HepG2 (cell line): ENCODE measurements at regions of chr11 and their contacts with region 1.

Region 1: GRCh38 chr11:129785383-129786111 is 30.1 kb upstream of the TMEM45B start:
- DNase-seq: peak; percentile 41
- ATAC-seq: peak; percentile 59
- H3K4me3 ChIP-seq: no peak overlapping the region
- H3K27ac ChIP-seq: no peak overlapping the region
- H3K4me1 ChIP-seq: peaks cover 39% of the 10 kb centered on the region
- H3K27me3 ChIP-seq: no peaks in the 10 kb centered on the region
- CTCF ChIP-seq: peak; percentile 53
- EP300 ChIP-seq: no peak
- POLR2A ChIP-seq: no peak
- RAD21 ChIP-seq: no peak

Region 2: GRCh38 chr11:129611661-129612446 is 173.7 kb before region 1 on chr11:
- CTCF ChIA-PET with region 1: no interaction called
- POLR2A ChIA-PET with region 1: no interaction called
- in situ Hi-C with region 1: no loop called
- intact Hi-C with region 1: no loop called
- DNase-seq: no peak
- ATAC-seq: peak; percentile 58
- H3K4me3 ChIP-seq: no peak overlapping the region
- H3K27ac ChIP-seq: no peak overlapping the region
- H3K4me1 ChIP-seq: no peaks in the 10 kb centered on the region
- H3K27me3 ChIP-seq: peaks cover 0 to 29% of the 10 kb centered on the region in 2 experiments; a peak in 1 of 5 replicates
- CTCF ChIP-seq: no peak
- EP300 ChIP-seq: no peak
- POLR2A ChIP-seq: no peak
- RAD21 ChIP-seq: no peak

Region 3: DNA sequence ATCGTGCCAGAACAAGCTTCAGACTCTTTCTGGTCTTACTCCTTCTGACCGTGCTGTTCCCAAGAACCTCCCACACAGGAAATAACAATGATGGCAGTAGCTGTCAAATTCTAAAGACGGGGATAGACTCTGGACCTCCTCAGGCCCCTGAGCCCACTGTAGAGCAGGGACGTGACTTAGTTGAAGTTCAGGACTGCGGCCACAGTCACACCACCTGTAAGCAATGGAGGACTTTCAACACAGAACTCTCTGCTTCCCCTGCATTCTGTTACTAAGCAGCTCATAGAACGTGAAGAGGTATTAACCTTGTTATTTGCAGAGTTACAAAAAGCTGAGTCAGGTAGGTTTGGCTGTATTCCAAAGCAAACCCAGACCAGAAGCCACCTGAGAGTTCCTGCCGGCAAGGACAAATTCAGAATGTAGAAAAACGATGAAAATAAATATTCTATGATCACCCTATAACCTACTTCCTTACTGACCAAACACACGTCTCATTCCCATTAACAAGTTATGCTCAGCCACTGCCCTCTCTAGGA is 42.8 kb after region 1 on chr11:
- CTCF ChIA-PET with region 1: no interaction called
- POLR2A ChIA-PET with region 1: no interaction called
- in situ Hi-C with region 1: no loop called
- intact Hi-C with region 1: loop called (anchors 5 kb)
- DNase-seq: peak; percentile 93
- ATAC-seq: peak; percentile 91
- H3K4me3 ChIP-seq: no peak overlapping the region
- H3K27ac ChIP-seq: peak overlapping the region; percentile 87
- H3K4me1 ChIP-seq: peaks cover 69% of the 10 kb centered on the region
- H3K27me3 ChIP-seq: no peaks in the 10 kb centered on the region
- CTCF ChIP-seq: peak; percentile 30; the same call in 1 of the 2 replicates
- EP300 ChIP-seq: peak in 1 of 2 experiments; percentile 78; a peak in 2 of 4 replicates
- POLR2A ChIP-seq: peak in 1 of 2 experiments; percentile 35; a peak in 1 of 4 replicates
- RAD21 ChIP-seq: no peak

Region 4: DNA sequence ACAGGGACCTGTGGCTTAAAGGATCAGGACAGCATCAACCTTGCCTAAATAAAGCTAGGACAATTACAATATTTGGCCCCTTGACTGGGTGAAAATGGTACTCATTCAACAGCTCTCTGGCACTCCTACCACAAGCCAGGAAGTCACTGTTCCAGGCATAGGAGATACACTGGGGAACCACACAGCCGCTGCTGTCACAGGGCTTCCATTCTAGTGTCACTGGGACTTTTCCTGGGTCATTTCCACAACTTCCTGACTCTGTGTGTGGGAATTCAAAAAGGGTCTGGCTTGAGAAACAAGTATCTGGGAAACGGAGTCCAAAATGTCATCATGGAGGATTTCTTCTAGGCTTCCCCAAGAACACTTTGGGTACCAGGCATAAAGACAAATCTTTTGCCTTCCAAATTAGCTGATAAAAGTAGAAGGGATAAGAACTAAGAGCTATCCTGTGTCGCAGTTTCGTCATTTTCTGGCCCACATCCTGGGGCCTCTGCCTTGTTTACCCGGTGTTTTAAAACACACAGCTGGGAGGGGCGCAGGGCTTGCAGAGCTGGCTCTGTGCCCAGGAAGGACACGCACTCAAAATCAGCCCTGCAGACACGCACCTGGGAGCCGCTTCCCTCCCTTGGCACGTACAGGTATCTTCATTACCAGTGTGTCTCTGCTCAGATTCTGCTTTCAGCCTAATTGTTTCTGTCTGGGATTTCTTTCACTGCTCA is 68.1 kb after region 1 on chr11:
- CTCF ChIA-PET with region 1: no interaction called
- POLR2A ChIA-PET with region 1: no interaction called
- in situ Hi-C with region 1: no loop called
- intact Hi-C with region 1: loop called (anchors 5 kb)
- DNase-seq: peak; percentile 85
- ATAC-seq: peak; percentile 88
- H3K4me3 ChIP-seq: no peak overlapping the region
- H3K27ac ChIP-seq: peak overlapping the region; percentile 65
- H3K4me1 ChIP-seq: peaks cover 41% of the 10 kb centered on the region
- H3K27me3 ChIP-seq: no peaks in the 10 kb centered on the region
- CTCF ChIP-seq: 0 out of 2 replicates have a peak, but pooled peaks have one; percentile 4
- EP300 ChIP-seq: peak in 1 of 2 experiments; percentile 86; a peak in 2 of 4 replicates
- POLR2A ChIP-seq: 0 out of 4 replicates have a peak, but pooled peaks of 1 of the 2 experiments have one; percentile 36
- RAD21 ChIP-seq: no peak

Region 5: DNA sequence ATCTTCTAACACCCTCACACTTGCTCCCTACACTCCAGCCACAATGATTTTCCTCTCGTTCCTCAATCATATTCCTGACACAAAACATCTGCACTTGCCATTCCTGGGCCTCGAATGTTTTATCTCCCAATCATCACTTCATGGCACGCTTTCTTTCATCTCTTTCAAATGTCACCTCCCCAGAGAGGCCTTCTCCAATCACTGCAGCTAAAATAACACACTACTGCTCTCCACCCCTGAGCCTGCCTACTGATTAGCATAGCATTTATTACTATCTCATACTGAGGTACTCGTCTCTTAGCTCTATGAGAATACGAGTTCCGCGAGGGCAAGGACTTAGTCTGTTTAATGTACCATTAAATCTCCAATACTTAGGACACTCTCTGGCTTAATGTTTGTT is 86.4 kb after region 1 on chr11:
- CTCF ChIA-PET with region 1: no interaction called
- POLR2A ChIA-PET with region 1: no interaction called
- in situ Hi-C with region 1: loop called (anchors 10 kb)
- intact Hi-C with region 1: loop called (anchors 5 kb)
- DNase-seq: no peak
- ATAC-seq: no peak
- H3K4me3 ChIP-seq: no peak overlapping the region
- H3K27ac ChIP-seq: no peak overlapping the region
- H3K4me1 ChIP-seq: no peaks in the 10 kb centered on the region
- H3K27me3 ChIP-seq: no peaks in the 10 kb centered on the region
- CTCF ChIP-seq: no peak
- EP300 ChIP-seq: no peak
- POLR2A ChIP-seq: no peak
- RAD21 ChIP-seq: no peak